AG04450 (cell line): ENCODE measurements at regions of chr6 and their contacts with region 1.

Region 1: GRCh38 chr6:11496152-11497060 is 41.1 kb upstream of the TMEM170B start:
- DNase-seq: peak; percentile 74
- H3K4me3 ChIP-seq: no peak overlapping the region
- H3K27ac ChIP-seq: no peak overlapping the region
- H3K27me3 ChIP-seq: no peaks in the 10 kb centered on the region
- CTCF ChIP-seq: peak; percentile 83

Region 2: GRCh38 chr6:11076540-11076939 is 419.9 kb before region 1 on chr6:
- CTCF ChIA-PET with region 1: interaction called, 24 read pairs
- POLR2A ChIA-PET with region 1: no interaction called
- DNase-seq: no peak
- H3K4me3 ChIP-seq: no peak overlapping the region
- H3K27ac ChIP-seq: no peak overlapping the region
- H3K27me3 ChIP-seq: no peaks in the 10 kb centered on the region
- CTCF ChIP-seq: no peak

Region 3: DNA sequence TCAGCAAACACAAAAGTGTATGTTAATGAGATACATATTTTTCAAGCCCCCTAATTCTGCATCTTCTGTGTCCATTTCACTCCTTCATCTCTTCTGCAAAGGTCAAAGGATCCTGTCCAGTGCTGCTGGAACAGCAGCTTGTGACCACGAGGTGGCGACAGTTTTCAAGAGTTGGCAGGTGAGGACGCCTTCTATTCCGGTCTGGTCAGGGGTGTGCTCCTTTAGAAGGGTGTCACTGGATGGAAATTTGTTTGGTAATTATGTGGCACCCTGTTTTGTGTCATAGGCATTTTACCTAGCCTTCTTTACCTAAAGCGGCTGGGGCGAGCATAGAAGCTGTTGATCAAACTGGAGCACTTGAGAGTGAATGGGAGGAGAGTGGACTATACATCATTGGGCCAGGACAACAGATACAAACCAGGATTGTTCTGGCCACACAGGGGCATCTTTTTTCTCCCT is 352.0 kb before region 1 on chr6:
- CTCF ChIA-PET with region 1: interaction called, 139 read pairs
- POLR2A ChIA-PET with region 1: no interaction called
- DNase-seq: peak; percentile 18
- H3K4me3 ChIP-seq: no peak overlapping the region
- H3K27ac ChIP-seq: no peak overlapping the region
- H3K27me3 ChIP-seq: no peaks in the 10 kb centered on the region
- CTCF ChIP-seq: peak; percentile 96

Region 4: GRCh38 chr6:11202513-11203305 is 293.7 kb before region 1 on chr6:
- CTCF ChIA-PET with region 1: interaction called, 17 read pairs
- POLR2A ChIA-PET with region 1: no interaction called
- DNase-seq: no peak
- H3K4me3 ChIP-seq: no peak overlapping the region
- H3K27ac ChIP-seq: no peak overlapping the region
- H3K27me3 ChIP-seq: no peaks in the 10 kb centered on the region
- CTCF ChIP-seq: no peak

Region 5: GRCh38 chr6:11277275-11278206 is 218.9 kb before region 1 on chr6:
- CTCF ChIA-PET with region 1: interaction called, 13 read pairs
- POLR2A ChIA-PET with region 1: no interaction called
- DNase-seq: peak; percentile 70
- H3K4me3 ChIP-seq: no peak overlapping the region
- H3K27ac ChIP-seq: peak overlapping the region; percentile 57
- H3K27me3 ChIP-seq: no peaks in the 10 kb centered on the region
- CTCF ChIP-seq: no peak

Region 6: DNA sequence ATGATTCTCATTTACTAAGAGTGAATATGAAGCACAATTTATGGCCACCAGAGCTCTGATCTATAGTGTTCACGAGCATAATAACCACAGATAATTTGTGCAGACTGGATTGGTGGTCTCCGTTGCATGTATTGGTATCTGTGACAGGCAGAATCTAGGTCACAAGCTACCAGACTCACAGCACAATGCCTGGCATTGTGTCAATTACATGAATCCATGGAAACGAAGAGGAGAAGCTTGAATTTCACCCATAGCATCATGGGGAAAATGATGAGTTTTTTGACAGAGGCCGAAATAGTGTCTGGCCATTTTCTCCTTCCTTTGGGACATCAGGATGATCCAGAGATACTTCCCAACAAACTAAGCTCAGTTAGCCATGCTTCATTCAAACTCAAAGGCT is 11.1 kb before region 1 on chr6:
- CTCF ChIA-PET with region 1: interaction called, 28 read pairs
- POLR2A ChIA-PET with region 1: no interaction called
- DNase-seq: no peak
- H3K4me3 ChIP-seq: no peak overlapping the region
- H3K27ac ChIP-seq: no peak overlapping the region
- H3K27me3 ChIP-seq: peaks cover 4% of the 10 kb centered on the region
- CTCF ChIP-seq: no peak

Region 7: GRCh38 chr6:11566609-11567008 is 70.2 kb after region 1 on chr6:
- CTCF ChIA-PET with region 1: no interaction called
- POLR2A ChIA-PET with region 1: no interaction called
- DNase-seq: no peak
- H3K4me3 ChIP-seq: no peak overlapping the region
- H3K27ac ChIP-seq: no peak overlapping the region
- H3K27me3 ChIP-seq: no peaks in the 10 kb centered on the region
- CTCF ChIP-seq: no peak